ENCODE measurements at regions of chr6 and their contacts with region 1.

Region 1: GRCh38 chr6:2917065-2917464 is 14.0 kb upstream of the SERPINB9 start:
- DNase-seq: peak in 1 of 2 experiments; percentile 46
- H3K4me3 ChIP-seq: no peak overlapping the region
- H3K27ac ChIP-seq: peak overlapping the region; percentile 43; the same call in 1 of the 2 replicates
- H3K4me1 ChIP-seq: peaks cover 9 to 32% (median 23%) of the 10 kb centered on the region in 4 experiments
- H3K27me3 ChIP-seq: no peaks in the 10 kb centered on the region
- CTCF ChIP-seq: peak in 2 of 3 experiments; percentile 32 to 42; a peak in 3 of 4 replicates
- EP300 ChIP-seq: no peak
- POLR2A ChIP-seq: no peak
- RAD21 ChIP-seq: peak in 1 of 2 experiments; percentile 26; a peak in 2 of 4 replicates

Region 2: GRCh38 chr6:2839195-2839981 is 77.7 kb before region 1 on chr6:
- CTCF ChIA-PET with region 1: no interaction called
- POLR2A ChIA-PET with region 1: no interaction called
- DNase-seq: no peak
- H3K4me3 ChIP-seq: no peak overlapping the region
- H3K27ac ChIP-seq: no peak overlapping the region
- H3K4me1 ChIP-seq: peaks cover 6 to 17% (median 9%) of the 10 kb centered on the region in 4 experiments
- H3K27me3 ChIP-seq: no peaks in the 10 kb centered on the region
- CTCF ChIP-seq: no peak
- EP300 ChIP-seq: no peak
- POLR2A ChIP-seq: no peak
- RAD21 ChIP-seq: no peak

Region 3: GRCh38 chr6:2853761-2854395 is 63.2 kb before region 1 on chr6:
- CTCF ChIA-PET with region 1: interaction called, 15 read pairs
- POLR2A ChIA-PET with region 1: no interaction called
- DNase-seq: no peak
- H3K4me3 ChIP-seq: peak overlapping the region in 2 of 4 experiments; percentile 4 to 30; a peak in 3 of 8 replicates
- H3K27ac ChIP-seq: 0 out of 2 replicates have a peak overlapping the region, but pooled peaks have one; percentile 13
- H3K4me1 ChIP-seq: peaks cover 3 to 20% (median 9%) of the 10 kb centered on the region in 4 experiments
- H3K27me3 ChIP-seq: no peaks in the 10 kb centered on the region
- CTCF ChIP-seq: no peak
- EP300 ChIP-seq: no peak
- POLR2A ChIP-seq: no peak
- RAD21 ChIP-seq: no peak

Region 4: GRCh38 chr6:2862712-2863181 is 54.3 kb before region 1 on chr6:
- CTCF ChIA-PET with region 1: interaction called, 29 read pairs
- POLR2A ChIA-PET with region 1: interaction called, 3 read pairs
- DNase-seq: no peak
- H3K4me3 ChIP-seq: no peak overlapping the region
- H3K27ac ChIP-seq: no peak overlapping the region
- H3K4me1 ChIP-seq: peaks cover 8 to 27% (median 17%) of the 10 kb centered on the region in 4 experiments
- H3K27me3 ChIP-seq: no peaks in the 10 kb centered on the region
- CTCF ChIP-seq: no peak
- EP300 ChIP-seq: no peak
- POLR2A ChIP-seq: no peak
- RAD21 ChIP-seq: no peak

Region 5: GRCh38 chr6:2876210-2877056 is 40.6 kb before region 1 on chr6:
- CTCF ChIA-PET with region 1: interaction called, 3 read pairs
- POLR2A ChIA-PET with region 1: interaction called, 10 read pairs
- DNase-seq: no peak
- H3K4me3 ChIP-seq: peak overlapping the region; percentile 25 to 83 (median 47); a peak in 6 of 8 replicates
- H3K27ac ChIP-seq: no peak overlapping the region; the same call in 1 of the 2 replicates
- H3K4me1 ChIP-seq: peaks cover 15 to 25% (median 18%) of the 10 kb centered on the region in 4 experiments
- H3K27me3 ChIP-seq: peaks cover 0 to 7% (median 6%) of the 10 kb centered on the region in 4 experiments; a peak in 3 of 7 replicates
- CTCF ChIP-seq: no peak
- EP300 ChIP-seq: no peak
- POLR2A ChIP-seq: no peak
- RAD21 ChIP-seq: no peak

Region 6: DNA sequence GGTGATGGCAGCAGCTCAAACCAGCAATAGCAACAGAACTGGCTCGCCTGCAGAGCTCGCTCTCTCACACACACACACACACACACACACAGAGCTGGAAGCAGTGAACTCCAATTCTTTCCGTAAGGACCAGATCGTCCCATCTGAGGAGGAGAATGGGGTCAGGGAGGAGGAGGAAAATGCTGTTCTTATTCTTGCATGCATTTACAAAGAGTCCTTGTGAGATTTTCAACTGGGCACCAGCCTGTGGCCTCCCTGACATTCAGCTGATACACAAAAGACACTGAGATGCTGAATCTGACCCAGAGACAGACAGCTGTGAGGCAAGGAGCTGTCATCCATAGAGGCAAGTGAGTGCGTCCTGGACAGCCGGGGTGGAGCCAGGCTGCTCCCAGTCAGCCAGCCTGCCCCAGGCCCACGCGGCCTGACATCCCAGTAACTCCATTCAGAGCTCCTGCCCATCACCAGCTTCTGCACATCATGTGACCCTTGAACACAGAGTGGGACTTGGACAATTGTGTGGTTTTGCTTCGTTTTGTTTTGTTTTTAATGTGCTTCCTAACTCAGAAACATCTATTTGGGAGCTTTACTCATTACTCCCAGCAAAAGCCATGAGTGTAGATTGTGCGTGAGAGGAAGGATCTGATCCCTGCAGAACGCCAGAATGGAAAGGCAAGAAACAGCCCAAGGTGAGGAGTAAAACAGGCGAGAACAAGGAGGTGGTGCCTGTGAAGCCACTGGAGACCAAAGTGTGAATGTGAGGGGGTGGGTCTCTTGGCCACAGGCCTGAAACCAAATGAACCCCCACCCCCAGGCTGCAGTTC is 16.0 kb before region 1 on chr6:
- CTCF ChIA-PET with region 1: interaction called, 14 read pairs
- POLR2A ChIA-PET with region 1: interaction called, 6 read pairs
- DNase-seq: no peak
- H3K4me3 ChIP-seq: peak overlapping the region; percentile 1 to 80 (median 41); a peak in 5 of 8 replicates
- H3K27ac ChIP-seq: no peak overlapping the region
- H3K4me1 ChIP-seq: peaks cover 3 to 23% (median 4%) of the 10 kb centered on the region in 4 experiments; a peak in 6 of 7 replicates
- H3K27me3 ChIP-seq: peaks cover 0 to 2% (median 0%) of the 10 kb centered on the region in 4 experiments; a peak in 2 of 7 replicates
- CTCF ChIP-seq: no peak
- EP300 ChIP-seq: no peak
- POLR2A ChIP-seq: no peak
- RAD21 ChIP-seq: no peak

Region 7: DNA sequence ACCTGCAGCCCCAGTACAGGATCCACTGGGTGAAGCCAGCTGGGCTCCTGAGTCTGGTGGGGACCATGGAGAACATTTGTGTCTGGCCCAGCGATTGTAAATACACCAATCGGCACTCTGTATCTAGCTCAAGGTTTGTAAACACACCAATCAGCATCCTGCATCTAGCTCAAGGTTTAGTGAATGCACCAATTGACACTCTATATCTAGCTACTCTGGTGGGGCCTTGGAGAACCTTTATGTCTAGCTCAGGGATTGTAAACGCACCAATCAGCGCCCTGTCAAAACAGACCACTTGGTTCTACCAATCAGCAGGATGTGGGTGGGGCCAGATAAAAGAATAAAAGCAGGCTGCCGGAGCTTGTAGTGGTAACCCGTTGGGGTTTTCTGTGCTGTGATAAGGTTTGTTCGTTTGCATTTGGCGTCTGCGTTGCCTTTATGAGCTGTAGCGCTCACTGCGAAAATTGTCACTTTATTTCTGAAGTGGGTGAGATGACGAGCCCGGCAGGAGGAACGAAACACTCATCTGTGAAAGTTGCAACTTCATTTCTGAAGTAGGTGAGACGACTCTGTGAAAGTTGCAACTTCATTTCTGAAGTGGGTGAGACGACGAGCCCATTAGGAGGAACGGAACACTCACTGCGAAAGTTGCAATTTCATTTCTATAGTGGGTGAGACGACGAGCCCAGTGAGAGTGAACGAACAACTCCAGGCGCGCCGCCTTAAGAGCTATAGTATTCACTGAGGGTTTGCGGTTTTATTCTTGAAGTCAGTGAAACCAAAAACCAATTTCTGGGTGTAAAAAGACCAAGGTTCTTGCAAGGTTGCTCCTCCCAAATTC is 23.2 kb after region 1 on chr6:
- CTCF ChIA-PET with region 1: interaction called, 34 read pairs
- POLR2A ChIA-PET with region 1: interaction called, 5 read pairs
- DNase-seq: peak in 1 of 2 experiments; percentile 33
- H3K4me3 ChIP-seq: no peak overlapping the region
- H3K27ac ChIP-seq: no peak overlapping the region
- H3K4me1 ChIP-seq: no peaks in the 10 kb centered on the region; a peak in 2 of 7 replicates
- H3K27me3 ChIP-seq: no peaks in the 10 kb centered on the region; a peak in 1 of 7 replicates
- CTCF ChIP-seq: no peak
- EP300 ChIP-seq: no peak
- POLR2A ChIP-seq: no peak
- RAD21 ChIP-seq: no peak

Region 8: DNA sequence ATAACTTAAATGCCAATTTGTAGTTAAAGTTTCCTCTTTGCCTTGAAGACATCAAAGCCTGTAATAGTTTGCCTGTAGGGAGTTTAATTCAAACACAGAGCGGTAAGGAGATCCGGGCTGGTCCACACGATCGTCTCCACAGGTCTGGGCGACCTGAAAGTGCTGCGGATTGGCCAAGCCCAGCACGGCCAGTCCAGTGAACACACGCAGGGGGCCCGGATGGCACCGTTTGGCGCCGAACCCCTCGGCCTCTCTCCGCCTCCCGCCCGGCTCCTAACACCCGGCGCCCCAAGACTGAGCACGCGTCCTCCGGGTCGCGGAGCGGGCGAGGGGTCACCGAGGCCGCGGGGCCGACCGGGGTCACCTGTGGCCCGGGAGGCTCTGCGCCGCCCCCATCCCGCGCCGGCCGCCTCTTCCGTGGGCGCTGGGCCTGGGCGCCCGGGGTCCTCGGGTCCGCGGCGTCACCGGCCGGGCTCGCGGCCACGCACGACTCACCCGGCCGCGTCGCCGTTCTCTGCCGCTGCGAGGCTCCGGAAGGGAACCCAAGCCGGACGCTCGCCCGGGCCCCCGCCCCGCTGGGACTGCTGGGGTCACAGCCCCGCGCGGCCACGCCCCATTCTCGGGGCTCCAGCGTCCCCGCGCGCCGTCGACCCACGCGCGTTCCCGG is 53.8 kb after region 1 on chr6:
- CTCF ChIA-PET with region 1: no interaction called
- POLR2A ChIA-PET with region 1: no interaction called
- DNase-seq: peak in 1 of 2 experiments; percentile 66
- H3K4me3 ChIP-seq: peak overlapping the region; percentile 44 to 78 (median 62)
- H3K27ac ChIP-seq: no peak overlapping the region
- H3K4me1 ChIP-seq: peaks cover 0 to 3% (median 2%) of the 10 kb centered on the region in 4 experiments; a peak in 4 of 7 replicates
- H3K27me3 ChIP-seq: peaks cover 0 to 2% (median 0%) of the 10 kb centered on the region in 4 experiments; a peak in 1 of 7 replicates
- CTCF ChIP-seq: no peak
- EP300 ChIP-seq: no peak
- POLR2A ChIP-seq: no peak; a peak in 1 of 3 replicates
- RAD21 ChIP-seq: no peak